ENCODE measurements at regions of chr9 and their contacts with region 1.

Region 1: DNA sequence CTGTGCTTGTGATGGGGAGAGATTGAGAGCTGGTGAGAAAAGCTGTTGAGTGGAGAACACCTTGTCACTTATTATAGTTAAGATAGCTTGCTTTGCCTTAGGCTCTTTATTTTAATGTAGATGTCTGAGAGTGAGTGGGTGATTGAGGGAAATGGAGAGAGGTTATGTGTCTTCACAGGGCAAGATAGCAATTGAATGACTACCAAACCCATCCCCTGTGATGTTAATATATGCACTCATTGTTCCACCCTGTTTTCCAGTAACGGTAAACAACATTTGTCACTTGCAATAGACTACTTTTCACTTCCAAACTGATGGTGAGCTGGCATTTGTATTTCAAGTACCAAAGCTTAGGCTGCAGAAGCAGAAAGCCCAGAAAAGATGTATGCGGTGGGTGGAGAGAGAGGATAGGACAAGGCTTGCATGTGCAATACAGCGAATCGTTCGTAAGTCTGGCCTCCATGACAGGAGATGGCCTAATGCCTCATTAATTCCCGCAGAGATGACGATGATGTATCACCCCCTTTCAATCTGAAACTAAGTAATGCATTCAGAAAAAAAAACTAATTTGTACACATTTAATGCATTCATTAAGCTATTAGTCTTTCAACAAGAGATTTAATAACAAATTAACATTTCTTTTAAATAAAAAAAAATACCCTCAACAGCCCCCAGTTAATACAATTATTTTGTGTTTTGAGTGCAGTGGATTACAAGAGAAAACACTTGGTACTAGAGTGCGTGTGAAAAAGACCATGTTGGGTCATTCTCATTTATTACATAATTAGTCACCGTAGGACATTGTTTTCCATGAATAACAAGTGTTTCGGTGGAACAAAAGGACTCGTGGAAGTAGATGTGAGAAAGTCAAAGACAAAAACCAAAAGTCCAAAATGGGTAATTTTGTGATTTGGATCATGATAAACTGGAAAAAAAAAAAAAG is 699.0 kb downstream of the BRINP1 start:
- DNase-seq: no peak
- H3K4me3 ChIP-seq: no peak overlapping the region
- H3K27ac ChIP-seq: no peak overlapping the region
- H3K4me1 ChIP-seq: no peaks in the 10 kb centered on the region
- H3K27me3 ChIP-seq: no peaks in the 10 kb centered on the region
- CTCF ChIP-seq: no peak

Region 2: DNA sequence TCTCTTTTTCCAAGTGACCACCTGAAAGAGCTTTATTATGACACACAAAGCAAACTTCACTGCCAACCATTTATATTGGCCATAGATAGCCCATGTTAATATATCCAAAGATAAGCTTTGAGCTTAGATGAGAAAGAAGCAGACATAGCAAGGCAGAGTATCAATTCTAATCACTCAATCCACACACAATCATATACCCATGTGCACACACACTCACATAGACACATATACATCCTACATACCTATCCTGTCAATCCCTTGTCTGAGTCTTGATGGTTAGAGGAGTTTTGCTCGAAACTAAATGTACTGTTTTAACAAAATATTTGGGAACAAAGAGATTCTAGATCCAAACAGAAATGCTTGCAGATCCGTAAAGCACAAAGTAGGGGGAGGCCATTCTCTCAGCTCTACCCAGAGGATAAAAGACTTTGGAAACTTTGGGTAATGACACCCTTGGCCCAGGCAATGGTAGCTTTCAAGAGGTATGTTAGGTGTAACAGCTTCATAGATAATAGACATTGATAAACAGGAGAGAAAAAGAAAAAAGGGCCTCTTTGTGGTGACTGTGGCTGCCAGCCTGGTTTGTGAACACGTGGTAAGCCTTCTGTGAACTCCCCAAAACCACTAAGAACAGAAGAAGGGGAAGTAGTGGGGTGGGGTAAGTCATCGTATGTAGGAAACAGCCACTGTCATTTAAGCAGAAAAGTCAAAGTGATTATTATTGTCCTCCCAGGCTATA is 844.5 kb before region 1 on chr9:
- CTCF ChIA-PET with region 1: interaction called, 37 read pairs
- dilution Hi-C with region 1: no loop called
- in situ Hi-C with region 1: no loop called
- intact Hi-C with region 1: no loop called
- DNase-seq: no peak
- H3K4me3 ChIP-seq: no peak overlapping the region
- H3K27ac ChIP-seq: no peak overlapping the region
- H3K4me1 ChIP-seq: no peaks in the 10 kb centered on the region
- H3K27me3 ChIP-seq: no peaks in the 10 kb centered on the region
- CTCF ChIP-seq: no peak

Region 3: GRCh38 chr9:118624608-118625007 is 45.7 kb before region 1 on chr9:
- CTCF ChIA-PET with region 1: no interaction called
- dilution Hi-C with region 1: loop called (anchors 5 kb)
- in situ Hi-C with region 1: no loop called
- intact Hi-C with region 1: no loop called
- DNase-seq: no peak
- H3K4me3 ChIP-seq: no peak overlapping the region
- H3K27ac ChIP-seq: no peak overlapping the region
- H3K4me1 ChIP-seq: no peaks in the 10 kb centered on the region
- H3K27me3 ChIP-seq: no peaks in the 10 kb centered on the region
- CTCF ChIP-seq: no peak